Activated CD4-positive, alpha-beta T cell treated with anti-CD3 and anti-CD28 coated beads for 36 hours (primary cell): ENCODE measurements at regions of chr14 and their contacts with region 1.

Region 1: GRCh38 chr14:102086972-102087761 is at the start of gene HSP90AA1:
- DNase-seq: peak; percentile 97
- ATAC-seq: peak; percentile 68
- H3K4me3 Mint-ChIP-seq: peak within 1 kb of the TSS; percentile 77
- H3K27ac Mint-ChIP-seq: peak within 1 kb of the TSS; percentile 92
- H3K4me1 Mint-ChIP-seq: peaks cover 46% of the 10 kb centered on the region
- H3K27me3 Mint-ChIP-seq: no peaks in the 10 kb centered on the region
- total RNA-seq, gene HSP90AA1: 1,344 to 1,372 TPM

Region 2: GRCh38 chr14:101721951-101722661 is 365.1 kb before region 1 on chr14:
- CTCF ChIA-PET with region 1: no interaction called
- POLR2A ChIA-PET with region 1: no interaction called
- intact Hi-C with region 1: loop called in 1 of 2 experiments (anchors 5 kb)
- DNase-seq: peak; percentile 78
- ATAC-seq: peak; percentile 90
- H3K4me3 Mint-ChIP-seq: peak overlapping the region; percentile 74
- H3K27ac Mint-ChIP-seq: peak overlapping the region; percentile 99
- H3K4me1 Mint-ChIP-seq: peaks cover 48% of the 10 kb centered on the region
- H3K27me3 Mint-ChIP-seq: no peaks in the 10 kb centered on the region

Region 3: GRCh38 chr14:101849125-101849524 is 238.0 kb before region 1 on chr14:
- CTCF ChIA-PET with region 1: no interaction called
- POLR2A ChIA-PET with region 1: no interaction called
- intact Hi-C with region 1: no loop called
- DNase-seq: no peak
- ATAC-seq: no peak
- H3K4me3 Mint-ChIP-seq: no peak overlapping the region
- H3K27ac Mint-ChIP-seq: peak overlapping the region; percentile 64
- H3K4me1 Mint-ChIP-seq: peaks cover 89% of the 10 kb centered on the region
- H3K27me3 Mint-ChIP-seq: no peaks in the 10 kb centered on the region

Region 4: DNA sequence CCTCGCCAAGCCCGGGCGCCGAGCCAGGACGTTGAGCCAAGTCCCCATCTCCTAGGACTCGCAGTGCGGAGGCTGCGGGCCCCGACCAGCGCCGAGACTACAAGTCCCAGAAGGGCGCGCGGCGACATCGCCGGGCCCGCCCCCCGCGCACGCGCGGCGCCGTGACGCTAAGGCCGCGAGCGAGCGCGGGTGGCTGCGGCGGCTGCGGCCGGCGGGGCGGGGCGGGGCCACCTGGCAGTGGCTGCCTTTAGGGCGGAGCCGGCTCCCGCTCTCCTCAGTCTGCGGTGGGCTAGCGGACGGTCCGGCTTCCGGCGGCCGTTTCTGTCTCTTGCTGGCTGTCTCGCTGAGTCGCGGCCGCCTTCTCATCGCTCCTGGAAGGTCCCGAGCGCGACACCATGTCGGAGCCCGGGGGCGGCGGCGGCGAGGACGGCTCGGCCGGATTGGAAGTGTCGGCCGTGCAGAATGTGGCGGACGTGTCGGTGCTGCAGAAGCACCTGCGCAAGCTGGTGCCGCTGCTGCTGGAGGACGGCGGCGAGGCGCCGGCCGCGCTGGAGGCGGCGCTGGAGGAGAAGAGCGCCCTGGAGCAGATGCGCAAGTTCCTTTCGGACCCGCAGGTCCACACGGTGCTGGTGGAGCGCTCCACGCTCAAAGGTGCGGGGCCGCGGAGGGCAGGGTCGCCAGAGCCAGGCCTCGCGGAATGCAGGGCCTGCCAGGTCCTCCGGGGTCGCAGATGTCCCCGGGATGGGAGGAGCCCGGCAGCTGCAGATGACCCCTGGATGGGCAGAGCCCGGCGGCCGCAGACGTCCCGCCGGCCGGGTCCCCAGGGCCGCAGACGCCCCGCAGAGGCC is 122.6 kb before region 1 on chr14 and contains the start of gene DYNC1H1:
- CTCF ChIA-PET with region 1: interaction called, 5 read pairs
- POLR2A ChIA-PET with region 1: interaction called, 7 read pairs
- intact Hi-C with region 1: loop called (anchors 1 to 2 kb)
- DNase-seq: peak; percentile 93
- ATAC-seq: peak; percentile 82
- H3K4me3 Mint-ChIP-seq: peak within 1 kb of the TSS; percentile 89
- H3K27ac Mint-ChIP-seq: peak within 1 kb of the TSS; percentile 91
- H3K4me1 Mint-ChIP-seq: peaks cover 39% of the 10 kb centered on the region
- H3K27me3 Mint-ChIP-seq: no peaks in the 10 kb centered on the region
- total RNA-seq, gene DYNC1H1: 283 to 293 TPM

Region 5: DNA sequence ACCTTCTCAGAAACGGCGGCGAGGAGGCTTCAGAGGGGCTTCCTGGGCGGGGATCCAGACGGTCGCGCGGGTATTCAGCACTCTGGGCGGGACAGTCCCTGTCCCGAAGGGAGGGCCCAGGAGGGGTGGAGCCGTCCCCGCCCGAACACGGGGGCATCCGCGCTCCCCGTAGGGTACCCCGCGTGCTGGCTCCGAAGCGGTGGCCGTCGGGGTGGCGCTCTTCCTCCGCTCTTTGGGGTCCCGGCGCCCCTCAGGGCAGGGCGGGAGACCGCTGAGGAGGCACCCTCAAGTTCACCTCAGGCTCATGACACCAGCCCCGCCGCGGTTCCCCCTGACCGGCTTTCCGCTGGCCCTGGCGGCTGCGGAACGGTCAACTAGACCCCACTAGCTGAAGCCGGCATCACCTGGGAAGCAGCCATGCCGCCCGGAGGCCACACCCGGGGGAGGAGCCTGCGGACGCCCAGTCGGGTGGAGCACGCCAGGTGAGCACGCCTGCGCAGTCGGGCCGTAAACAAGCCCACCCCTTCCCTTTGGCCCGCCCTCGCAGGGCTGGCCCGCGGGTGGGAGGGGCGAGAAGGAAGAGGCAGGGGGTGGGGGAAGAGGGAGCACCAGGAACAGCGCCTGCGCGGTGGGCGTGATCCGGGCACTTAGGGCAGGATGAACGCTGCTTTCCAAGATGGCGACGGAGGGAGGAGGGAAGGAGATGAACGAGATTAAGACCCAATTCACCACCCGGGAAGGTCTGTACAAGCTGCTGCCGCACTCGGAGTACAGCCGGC is 52.3 kb after region 1 on chr14 and contains the start of gene WDR20:
- CTCF ChIA-PET with region 1: no interaction called
- POLR2A ChIA-PET with region 1: no interaction called
- intact Hi-C with region 1: loop called (anchors 1 kb)
- DNase-seq: peak; percentile 100
- ATAC-seq: peak; percentile 94
- H3K4me3 Mint-ChIP-seq: peak within 1 kb of the TSS; percentile 96
- H3K27ac Mint-ChIP-seq: peak within 1 kb of the TSS; percentile 94
- H3K4me1 Mint-ChIP-seq: peaks cover 21% of the 10 kb centered on the region
- H3K27me3 Mint-ChIP-seq: no peaks in the 10 kb centered on the region
- total RNA-seq, gene WDR20: 18.2 to 24.8 TPM

Region 6: DNA sequence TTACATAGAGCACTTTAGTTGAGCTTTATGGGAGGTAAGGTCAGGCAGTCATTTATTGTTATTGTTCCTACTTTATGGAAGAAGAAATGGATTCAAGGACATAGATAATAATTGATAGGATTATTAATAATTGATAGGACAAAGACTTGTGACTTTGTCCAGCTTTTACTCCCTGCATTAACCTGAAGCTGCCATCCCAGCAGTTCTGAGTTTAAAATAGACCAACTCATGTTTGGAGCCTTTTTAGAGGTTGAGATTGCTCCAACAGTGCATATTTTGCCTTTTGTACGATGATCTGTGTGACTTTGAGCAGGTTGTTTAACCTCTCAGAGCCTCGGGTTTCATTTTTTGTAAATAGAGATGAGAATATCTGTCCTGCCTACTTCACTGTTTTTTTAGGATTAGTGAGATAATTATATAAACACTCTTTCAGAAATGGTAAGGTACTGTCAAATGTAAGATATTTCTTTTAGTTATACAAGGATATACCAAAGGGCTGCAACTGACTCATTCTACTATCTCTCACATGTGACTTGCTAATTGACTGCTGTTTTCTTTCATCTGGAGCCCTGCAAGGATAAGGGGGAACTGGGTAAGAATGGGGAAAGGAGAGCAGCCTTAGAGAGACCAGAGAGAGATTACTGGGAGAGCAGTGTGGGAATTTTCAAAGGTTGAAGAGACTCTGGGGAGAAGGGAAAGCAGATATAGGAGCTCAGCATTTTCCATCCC is 67.8 kb after region 1 on chr14:
- CTCF ChIA-PET with region 1: no interaction called
- POLR2A ChIA-PET with region 1: no interaction called
- intact Hi-C with region 1: no loop called
- DNase-seq: no peak
- ATAC-seq: peak; percentile 53
- H3K4me3 Mint-ChIP-seq: no peak overlapping the region
- H3K27ac Mint-ChIP-seq: peak overlapping the region; percentile 56
- H3K4me1 Mint-ChIP-seq: peaks cover 37% of the 10 kb centered on the region
- H3K27me3 Mint-ChIP-seq: no peaks in the 10 kb centered on the region

Region 7: DNA sequence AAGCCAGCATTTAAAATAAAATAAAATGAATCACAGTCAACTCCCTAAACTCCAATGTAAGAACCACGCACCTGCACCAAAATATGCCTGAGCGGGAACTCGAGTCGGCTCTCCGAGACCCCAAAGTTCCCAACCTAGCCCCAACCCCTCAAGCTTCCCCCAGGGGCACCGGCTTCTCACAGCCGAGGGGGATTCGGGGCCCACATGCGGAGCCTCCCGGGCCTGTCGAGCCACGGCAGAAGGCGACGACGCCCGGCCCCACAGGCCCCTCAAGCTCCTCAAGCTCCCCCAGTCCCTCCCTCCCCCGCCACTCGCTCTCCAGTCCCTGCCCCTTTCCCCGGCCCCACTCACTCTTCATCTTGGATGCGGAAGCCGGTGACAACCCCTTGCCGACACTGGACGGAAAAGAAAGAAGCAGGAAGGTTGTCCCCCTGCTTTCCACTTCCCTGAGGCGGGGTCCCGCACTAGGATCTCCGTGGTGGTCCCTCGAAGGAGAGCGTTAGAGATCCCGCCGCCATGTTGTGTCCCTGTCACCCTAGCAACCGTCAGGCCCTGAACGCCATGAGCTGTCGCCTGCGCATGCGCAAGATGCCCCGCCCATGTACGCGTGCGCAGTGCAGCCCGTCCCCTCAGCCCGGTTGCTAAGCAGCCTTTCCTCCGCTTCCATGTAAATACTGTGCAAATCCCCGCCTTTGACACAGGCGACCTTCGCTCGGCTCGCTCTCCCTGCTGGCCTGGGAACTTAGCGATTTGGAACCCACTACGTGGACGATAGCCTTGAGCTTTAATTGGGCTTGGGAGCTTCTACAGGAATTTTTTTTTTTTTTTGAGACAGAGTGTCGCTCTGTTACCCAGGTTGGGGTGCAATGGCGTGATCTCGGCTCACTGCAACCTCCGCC is 217.7 kb after region 1 on chr14 and contains the start of gene MOK:
- CTCF ChIA-PET with region 1: no interaction called
- POLR2A ChIA-PET with region 1: no interaction called
- intact Hi-C with region 1: loop called in 1 of 2 experiments (anchors 1 kb)
- DNase-seq: peak; percentile 97
- ATAC-seq: peak; percentile 98
- H3K4me3 Mint-ChIP-seq: peak within 1 kb of the TSS; percentile 93
- H3K27ac Mint-ChIP-seq: peak within 1 kb of the TSS; percentile 60
- H3K4me1 Mint-ChIP-seq: peaks cover 5% of the 10 kb centered on the region
- H3K27me3 Mint-ChIP-seq: no peaks in the 10 kb centered on the region
- total RNA-seq, gene MOK: 6.5 to 6.6 TPM

Region 8: GRCh38 chr14:102998393-102998792 is 911.2 kb after region 1 on chr14:
- CTCF ChIA-PET with region 1: no interaction called
- POLR2A ChIA-PET with region 1: interaction called, 10 read pairs
- intact Hi-C with region 1: no loop called
- DNase-seq: no peak
- ATAC-seq: no peak
- H3K4me3 Mint-ChIP-seq: no peak overlapping the region
- H3K27ac Mint-ChIP-seq: no peak overlapping the region
- H3K4me1 Mint-ChIP-seq: no peaks in the 10 kb centered on the region
- H3K27me3 Mint-ChIP-seq: no peaks in the 10 kb centered on the region